GM10248 (cell line): ENCODE measurements at regions of chr7 and their contacts with region 1.

Region 1: GRCh38 chr7:103412151-103412550 is 33.9 kb downstream of the SLC26A5 start:
- DNase-seq: no peak
- CTCF ChIP-seq: no peak

Region 2: GRCh38 chr7:103296901-103297836 is 115.0 kb before region 1 on chr7 and contains the start of gene PMPCB:
- CTCF ChIA-PET with region 1: interaction called, 21 read pairs
- POLR2A ChIA-PET with region 1: no interaction called
- DNase-seq: peak; percentile 91
- CTCF ChIP-seq: peak; percentile 93

Region 3: GRCh38 chr7:103447073-103447951 is 35.2 kb after region 1 on chr7:
- CTCF ChIA-PET with region 1: no interaction called
- POLR2A ChIA-PET with region 1: no interaction called
- DNase-seq: peak; percentile 62
- CTCF ChIP-seq: peak; percentile 69